ENCODE measurements at regions of chr9 and their contacts with region 1.

Region 1: DNA sequence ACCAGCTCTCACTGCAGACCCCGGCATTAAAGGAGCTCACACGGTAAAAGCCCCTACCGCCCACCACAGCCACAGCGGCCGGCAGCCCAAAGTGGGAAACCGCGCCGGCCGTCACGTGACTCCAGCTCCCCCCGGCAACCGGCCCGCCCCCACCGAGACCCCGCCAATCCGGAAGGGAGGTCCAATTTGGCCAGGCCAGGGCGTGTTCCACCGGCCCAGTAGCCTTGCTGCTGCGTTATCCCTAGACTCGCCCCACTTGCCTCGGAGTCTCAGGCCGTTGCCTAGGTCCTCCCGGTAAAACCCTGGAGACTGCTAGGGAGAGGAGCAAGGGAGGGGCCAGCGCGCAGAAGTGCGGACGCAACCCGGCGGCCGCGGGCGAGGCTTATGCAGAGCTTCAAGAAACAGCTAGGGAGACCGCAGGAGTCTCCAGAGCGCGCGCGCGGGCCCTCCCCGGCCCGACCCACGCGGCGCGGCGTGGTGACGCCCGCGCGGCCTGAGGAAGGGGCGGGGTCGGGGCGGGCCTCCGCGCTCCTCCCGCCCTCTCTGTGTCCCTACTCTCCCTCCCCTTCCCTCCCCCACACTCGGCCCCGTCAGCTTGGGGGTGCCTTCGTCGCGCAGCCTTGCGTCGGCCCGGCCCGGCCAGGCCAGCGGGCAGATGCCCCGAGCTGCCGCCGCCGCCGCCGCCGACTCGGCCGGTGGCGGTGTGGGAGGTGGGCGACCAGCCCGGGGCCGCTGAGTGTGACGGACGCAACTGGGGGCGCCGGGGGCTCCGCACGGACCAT is at the start of gene RIC1:
- DNase-seq: peak; percentile 97
- H3K4me3 Mint-ChIP-seq: peak within 1 kb of the TSS; percentile 100
- H3K27ac Mint-ChIP-seq: peak within 1 kb of the TSS; percentile 99
- H3K4me1 Mint-ChIP-seq: peaks cover 49% of the 10 kb centered on the region
- H3K27me3 Mint-ChIP-seq: no peaks in the 10 kb centered on the region
- total RNA-seq, gene RIC1: 20.2 and 20.4 TPM in 2 replicates

Region 2: DNA sequence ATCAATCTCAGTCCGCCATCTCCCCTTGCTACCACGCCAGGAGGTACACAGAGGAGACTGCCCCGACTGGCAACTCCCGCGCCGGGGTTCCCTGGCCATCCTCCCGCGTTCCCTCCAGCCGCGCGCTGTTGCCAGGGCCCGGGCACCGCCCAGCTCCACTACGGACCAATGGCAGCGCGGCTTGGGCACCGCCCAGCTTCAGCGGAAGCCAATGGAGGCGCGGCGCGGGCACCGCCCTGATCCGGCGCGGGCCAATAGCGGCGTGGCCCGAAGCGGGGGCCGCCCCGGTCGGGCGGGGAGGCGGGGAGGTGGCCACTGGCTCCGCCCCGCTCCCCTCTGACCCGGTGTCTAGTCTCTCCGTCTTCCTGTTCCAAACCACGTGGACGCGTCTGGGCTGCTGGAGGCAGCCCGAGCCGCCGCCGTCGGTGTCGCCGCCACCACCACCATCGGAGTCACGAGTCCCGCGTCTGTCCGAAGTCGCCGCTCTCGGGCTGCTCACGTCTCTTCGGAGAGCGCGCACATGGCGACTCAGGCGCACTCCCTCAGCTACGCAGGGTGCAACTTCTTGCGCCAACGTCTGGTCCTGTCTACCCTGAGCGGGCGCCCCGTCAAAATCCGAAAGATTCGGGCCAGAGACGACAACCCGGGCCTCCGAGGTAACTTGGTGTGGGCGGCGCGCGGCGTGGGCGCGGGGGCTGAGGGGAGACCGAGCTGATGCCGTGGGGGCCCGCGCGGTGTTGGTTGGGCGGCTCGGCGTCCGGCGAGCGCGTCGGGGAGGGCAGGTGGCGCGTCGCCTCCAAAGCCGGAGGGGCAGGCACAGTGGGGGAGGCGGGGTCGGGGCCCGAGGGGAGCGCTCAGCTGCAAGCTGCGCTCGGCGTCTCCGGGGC is 835.9 kb before region 1 on chr9 and contains the start of gene RCL1:
- intact Hi-C with region 1: loop called (anchors 5 kb)
- DNase-seq: peak; percentile 100
- H3K4me3 Mint-ChIP-seq: peak within 1 kb of the TSS; percentile 82
- H3K27ac Mint-ChIP-seq: peak within 1 kb of the TSS; percentile 95
- H3K4me1 Mint-ChIP-seq: peaks cover 51% of the 10 kb centered on the region
- H3K27me3 Mint-ChIP-seq: peaks cover 9% of the 10 kb centered on the region
- total RNA-seq, gene RCL1: 44.1 and 44.6 TPM in 2 replicates

Region 3: GRCh38 chr9:5459289-5459829 is 169.4 kb before region 1 on chr9:
- intact Hi-C with region 1: loop called (anchors 1 kb)
- DNase-seq: peak; percentile 75
- H3K4me3 Mint-ChIP-seq: peak overlapping the region; percentile 81
- H3K27ac Mint-ChIP-seq: peak overlapping the region; percentile 85
- H3K4me1 Mint-ChIP-seq: peaks cover 58% of the 10 kb centered on the region
- H3K27me3 Mint-ChIP-seq: no peaks in the 10 kb centered on the region

Region 4: DNA sequence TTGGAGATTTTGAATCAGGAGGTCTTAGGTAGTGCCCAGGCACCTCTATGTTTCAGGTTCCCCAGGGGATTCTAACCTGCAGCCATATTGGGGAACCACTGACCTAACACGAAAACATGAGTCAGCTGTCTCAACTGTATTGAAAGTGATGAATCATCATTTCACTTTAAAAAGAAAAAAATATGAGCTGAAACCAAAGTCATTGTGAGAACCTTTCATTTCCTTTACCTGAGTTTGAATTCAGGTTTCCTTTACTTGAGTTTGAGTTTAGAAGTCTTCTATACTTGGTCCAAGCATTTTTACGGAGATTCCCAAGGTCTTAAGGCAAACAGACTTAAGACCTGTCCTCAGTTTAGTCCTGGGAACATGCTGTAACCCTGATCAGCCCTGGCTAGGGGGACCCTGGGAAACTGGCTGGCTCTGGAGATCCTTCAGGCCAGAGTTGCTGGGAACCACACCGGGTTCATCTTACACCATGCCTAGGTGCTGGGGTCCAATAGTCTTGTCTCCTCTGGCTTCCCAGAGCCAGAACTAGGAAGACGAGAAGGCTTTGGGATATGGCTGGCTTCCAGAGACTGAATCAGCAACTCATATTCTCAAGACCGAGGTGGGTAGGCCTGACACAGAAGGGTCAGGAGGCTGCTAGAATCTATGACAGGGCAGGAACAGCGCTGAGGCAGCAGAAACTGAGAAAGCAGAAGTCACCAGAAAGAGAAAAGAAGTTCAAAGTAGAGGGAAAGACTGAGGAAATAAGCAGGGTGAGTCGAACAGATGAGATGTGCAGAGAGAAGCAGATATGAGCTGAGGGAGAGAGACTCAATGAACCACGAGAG is 134.8 kb before region 1 on chr9:
- intact Hi-C with region 1: no loop called
- DNase-seq: peak; percentile 70
- H3K4me3 Mint-ChIP-seq: peak overlapping the region; percentile 40
- H3K27ac Mint-ChIP-seq: peak overlapping the region; percentile 73
- H3K4me1 Mint-ChIP-seq: peaks cover 15% of the 10 kb centered on the region
- H3K27me3 Mint-ChIP-seq: no peaks in the 10 kb centered on the region

Region 5: GRCh38 chr9:5644501-5644900 is 15.8 kb after region 1 on chr9:
- intact Hi-C with region 1: loop called (anchors 1 kb)
- DNase-seq: no peak
- H3K4me3 Mint-ChIP-seq: no peak overlapping the region
- H3K27ac Mint-ChIP-seq: peak overlapping the region; percentile 52
- H3K4me1 Mint-ChIP-seq: peaks cover 16% of the 10 kb centered on the region
- H3K27me3 Mint-ChIP-seq: no peaks in the 10 kb centered on the region

Region 6: DNA sequence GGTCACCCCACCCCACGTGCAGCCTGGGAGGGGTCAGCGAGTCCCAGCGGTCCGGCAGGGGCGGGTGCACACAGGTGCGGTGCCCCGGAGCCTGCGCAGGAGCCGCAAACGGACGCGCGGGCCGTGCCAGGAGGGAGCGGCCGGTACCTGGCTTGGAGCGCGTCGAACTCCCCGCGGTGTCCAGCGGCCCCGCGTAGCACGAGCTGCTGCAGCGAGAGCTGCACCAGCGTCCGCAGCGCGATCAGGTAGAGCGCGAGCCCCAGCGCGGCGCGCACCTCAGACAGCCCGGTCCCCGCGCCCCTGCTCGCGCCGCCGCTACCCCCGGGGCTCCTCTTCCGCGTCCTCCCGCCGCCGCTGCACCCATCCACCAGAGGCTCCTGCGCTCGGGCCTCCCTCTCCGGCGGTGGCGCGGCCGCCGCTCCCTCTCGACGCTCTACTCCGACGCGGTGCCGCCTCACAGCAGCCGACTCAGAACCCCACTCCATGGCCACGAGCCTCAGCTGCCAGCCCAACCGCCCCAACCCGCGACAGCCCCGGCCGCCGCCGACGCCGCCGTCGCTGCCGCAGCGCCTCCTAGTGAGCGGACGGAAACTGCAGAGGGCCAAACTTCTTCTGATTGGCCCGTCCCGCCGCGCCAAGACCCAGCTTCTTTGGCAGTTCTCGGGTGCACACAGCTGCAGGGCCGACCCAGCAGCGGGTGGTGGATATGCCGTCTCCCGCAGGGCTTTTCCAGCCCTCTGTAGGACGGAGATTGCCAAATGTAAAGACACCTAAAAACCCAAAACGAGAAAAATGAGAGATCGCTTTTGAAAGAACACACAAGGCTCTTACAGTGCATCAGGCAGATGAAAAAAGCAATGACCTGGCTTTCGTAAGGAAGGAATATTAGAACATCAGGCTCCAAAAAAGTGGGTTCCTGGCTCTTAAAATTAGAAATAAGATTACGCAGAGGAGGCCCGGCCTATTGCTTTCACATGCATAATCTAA is 204.1 kb after region 1 on chr9 and contains the start of gene ERMP1:
- intact Hi-C with region 1: loop called (anchors 2 kb)
- DNase-seq: peak; percentile 97
- H3K4me3 Mint-ChIP-seq: peak within 1 kb of the TSS; percentile 98
- H3K27ac Mint-ChIP-seq: peak within 1 kb of the TSS; percentile 88
- H3K4me1 Mint-ChIP-seq: peaks cover 44% of the 10 kb centered on the region
- H3K27me3 Mint-ChIP-seq: peaks cover 4% of the 10 kb centered on the region
- total RNA-seq, gene ERMP1: 17.3 and 18.0 TPM in 2 replicates

Region 7: DNA sequence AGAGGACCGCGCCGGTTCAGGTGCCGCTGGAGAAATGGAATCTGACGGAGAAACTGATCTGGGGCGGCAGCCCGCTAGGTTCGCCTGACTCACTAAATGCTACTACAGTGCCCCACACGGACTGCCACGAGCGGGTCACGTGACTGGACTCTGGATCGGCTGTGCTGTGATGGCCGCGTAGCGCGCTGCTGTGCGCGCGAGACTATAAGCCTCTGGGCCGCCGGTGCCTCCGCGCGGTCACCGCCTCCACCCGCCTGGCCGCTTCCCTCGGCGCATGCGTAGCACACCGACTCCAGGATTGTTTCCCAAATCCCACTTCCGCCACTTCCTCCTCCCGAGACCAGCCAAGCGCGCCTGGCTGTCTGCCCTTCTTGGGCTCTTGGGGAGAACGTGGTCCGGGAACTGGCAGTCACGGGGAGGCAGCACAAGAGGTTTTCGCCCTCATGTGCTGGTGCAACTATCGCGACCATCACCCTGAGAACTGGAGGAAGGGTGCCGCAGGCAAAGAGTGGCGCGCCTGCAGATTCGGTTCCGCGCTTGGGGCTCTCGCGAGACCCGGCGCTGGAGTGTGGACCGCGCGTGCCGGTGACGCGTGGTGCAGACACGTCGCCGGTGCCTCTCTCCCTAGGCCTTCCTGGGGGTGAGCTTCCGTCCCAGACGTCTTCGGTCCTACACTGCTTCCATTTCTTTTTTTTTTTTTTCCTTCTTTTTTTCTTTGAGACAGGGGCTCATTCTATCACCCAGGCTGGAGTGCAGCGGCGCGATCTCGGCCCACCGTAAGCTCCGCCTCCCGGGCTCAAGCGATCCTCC is 1052.6 kb after region 1 on chr9:
- intact Hi-C with region 1: loop called (anchors 2 kb)
- DNase-seq: peak; percentile 96
- H3K4me3 Mint-ChIP-seq: peak overlapping the region; percentile 97
- H3K27ac Mint-ChIP-seq: peak overlapping the region; percentile 99
- H3K4me1 Mint-ChIP-seq: peaks cover 13% of the 10 kb centered on the region
- H3K27me3 Mint-ChIP-seq: no peaks in the 10 kb centered on the region